Activated CD8-positive, alpha-beta memory T cell treated with anti-CD3 and anti-CD28 coated beads, Interleukin-2, amount 10 ng/mL, durations not matched to agents 7 days and 5 days (primary cell): ENCODE measurements at regions of chr7 and their contacts with region 1.

Region 1: DNA sequence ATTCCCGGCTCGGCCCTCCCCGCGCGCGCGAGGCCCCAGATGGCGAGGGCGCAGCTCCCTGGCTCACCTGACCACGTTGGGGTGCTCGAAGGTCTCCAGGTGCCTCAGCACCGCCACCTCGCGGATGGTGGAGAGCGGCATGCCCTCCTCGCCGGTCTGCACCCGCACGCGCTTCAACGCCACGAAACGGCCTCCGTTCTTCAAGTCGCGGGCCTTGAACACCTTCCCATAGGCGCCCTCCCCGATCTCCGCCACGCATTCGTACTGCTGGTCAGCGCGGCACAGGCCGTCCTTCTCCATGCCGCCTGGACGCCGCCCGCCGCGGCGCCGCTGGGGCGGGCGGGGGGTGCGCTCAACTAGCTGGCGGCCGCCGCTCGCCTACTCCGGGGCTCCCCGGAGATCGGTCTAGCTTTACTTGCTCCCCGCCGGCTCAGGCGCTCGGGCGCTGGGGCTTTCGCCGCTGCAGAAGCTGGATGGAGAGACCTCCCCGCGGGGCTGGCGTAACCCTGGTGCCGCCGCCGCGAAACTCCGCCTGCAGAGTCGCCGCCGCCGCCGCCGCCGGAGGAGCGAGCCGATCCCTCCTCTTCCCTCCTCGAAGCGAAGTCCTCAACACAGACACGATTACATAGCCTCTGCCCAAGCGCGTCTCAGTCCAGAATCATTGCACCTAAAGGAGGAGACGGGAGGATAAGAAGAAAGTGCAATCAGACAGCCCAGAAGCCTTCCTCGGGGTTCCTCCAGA is 3.2 kb downstream of the CDK6 start:
- DNase-seq: peak; percentile 94
- ATAC-seq: peak; percentile 68
- H3K4me3 Mint-ChIP-seq: peak overlapping the region; percentile 97
- H3K27ac Mint-ChIP-seq: peak overlapping the region; percentile 90
- H3K4me1 Mint-ChIP-seq: peaks cover 41% of the 10 kb centered on the region
- H3K27me3 Mint-ChIP-seq: no peaks in the 10 kb centered on the region

Region 2: GRCh38 chr7:92621026-92621540 is 212.1 kb before region 1 on chr7:
- CTCF ChIA-PET with region 1: interaction called, 66 read pairs
- DNase-seq: peak; percentile 91
- ATAC-seq: peak; percentile 77
- H3K4me3 Mint-ChIP-seq: peak overlapping the region; percentile 19
- H3K27ac Mint-ChIP-seq: peak overlapping the region; percentile 92
- H3K4me1 Mint-ChIP-seq: peaks cover 56% of the 10 kb centered on the region
- H3K27me3 Mint-ChIP-seq: no peaks in the 10 kb centered on the region

Region 3: GRCh38 chr7:92682903-92683539 is 150.2 kb before region 1 on chr7:
- CTCF ChIA-PET with region 1: interaction called, 11 read pairs
- DNase-seq: no peak
- ATAC-seq: peak; percentile 40
- H3K4me3 Mint-ChIP-seq: peak overlapping the region; percentile 11
- H3K27ac Mint-ChIP-seq: peak overlapping the region; percentile 91
- H3K4me1 Mint-ChIP-seq: peaks cover 84% of the 10 kb centered on the region
- H3K27me3 Mint-ChIP-seq: no peaks in the 10 kb centered on the region

Region 4: GRCh38 chr7:92698237-92698841 is 134.9 kb before region 1 on chr7:
- CTCF ChIA-PET with region 1: interaction called, 15 read pairs
- DNase-seq: no peak
- ATAC-seq: no peak
- H3K4me3 Mint-ChIP-seq: no peak overlapping the region
- H3K27ac Mint-ChIP-seq: no peak overlapping the region
- H3K4me1 Mint-ChIP-seq: peaks cover 9% of the 10 kb centered on the region
- H3K27me3 Mint-ChIP-seq: no peaks in the 10 kb centered on the region

Region 5: DNA sequence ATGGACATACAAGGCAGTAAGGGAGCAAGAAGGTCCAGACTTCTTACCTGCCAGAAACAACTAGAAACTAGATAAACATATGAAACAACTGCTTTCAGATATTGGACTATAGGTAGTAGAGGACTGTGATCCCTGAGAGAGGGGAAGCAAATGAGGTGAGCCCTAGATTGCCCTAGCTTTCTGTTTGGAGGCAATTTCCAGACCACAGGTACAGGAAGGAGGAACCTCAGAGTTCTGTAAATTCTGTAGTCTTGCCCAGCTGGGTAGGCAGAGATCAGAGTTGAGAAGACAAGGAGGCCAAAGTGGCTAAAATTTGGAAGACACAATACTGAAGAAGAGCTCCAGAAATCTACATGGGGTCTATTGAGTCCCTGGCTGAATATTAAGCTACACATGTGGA is 17.8 kb before region 1 on chr7:
- CTCF ChIA-PET with region 1: interaction called, 90 read pairs
- DNase-seq: no peak
- ATAC-seq: peak; percentile 48
- H3K4me3 Mint-ChIP-seq: peak overlapping the region; percentile 10
- H3K27ac Mint-ChIP-seq: peak overlapping the region; percentile 77
- H3K4me1 Mint-ChIP-seq: peaks cover 91% of the 10 kb centered on the region
- H3K27me3 Mint-ChIP-seq: no peaks in the 10 kb centered on the region